ENCODE measurements at regions of chr7 and their contacts with region 1.

Region 1: GRCh38 chr7:108146070-108146837 is 16.1 kb upstream of the LAMB4 start:
- DNase-seq: peak; percentile 85
- H3K4me3 ChIP-seq: peak overlapping the region; percentile 1
- CTCF ChIP-seq: peak; percentile 93

Region 2: DNA sequence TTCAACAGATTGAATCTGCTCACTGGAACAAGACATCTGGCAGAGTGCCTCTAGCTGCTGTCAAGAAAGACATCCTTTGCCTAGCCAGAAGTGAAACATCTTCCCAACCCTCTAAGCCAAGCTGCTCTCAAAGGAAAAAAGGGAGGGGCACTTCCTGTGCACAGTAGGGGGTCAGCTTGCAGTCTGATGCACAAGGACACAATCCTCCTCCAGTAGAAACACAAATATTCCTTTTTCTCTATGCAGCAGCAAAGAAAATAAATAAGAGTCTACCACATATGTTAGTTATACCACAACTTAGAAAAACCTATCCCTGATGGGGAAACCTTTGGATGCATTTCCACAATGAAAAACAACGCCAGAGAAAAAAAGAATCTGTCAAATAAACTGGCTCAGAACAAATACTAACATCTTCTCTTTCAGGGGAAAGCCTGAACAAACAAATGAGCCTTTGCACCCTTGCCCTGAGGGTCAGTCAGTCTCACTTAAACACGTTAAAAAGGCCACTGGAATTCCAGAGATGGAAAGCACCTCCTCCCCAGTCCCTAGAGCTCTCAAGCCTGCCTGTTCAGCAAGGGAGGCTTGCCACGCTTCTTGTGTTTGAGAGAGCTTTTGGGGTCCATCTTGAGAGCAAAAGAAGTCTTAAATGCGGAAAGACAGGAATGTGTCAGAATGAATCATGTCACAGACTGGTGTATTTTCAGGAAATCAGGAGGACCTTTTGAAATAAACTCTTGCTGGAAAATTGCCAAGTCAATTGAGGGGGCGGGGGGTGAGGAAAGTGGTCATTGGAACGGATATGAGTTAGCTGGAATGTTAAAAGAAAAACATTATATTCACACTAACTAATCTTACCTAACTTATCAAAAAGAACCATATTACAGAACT is 150.8 kb before region 1 on chr7:
- in situ Hi-C with region 1: loop called (anchors 5 kb)
- DNase-seq: no peak
- H3K4me3 ChIP-seq: no peak overlapping the region
- CTCF ChIP-seq: no peak

Region 3: GRCh38 chr7:108203537-108203936 is 57.3 kb after region 1 on chr7:
- in situ Hi-C with region 1: no loop called
- DNase-seq: no peak
- H3K4me3 ChIP-seq: no peak overlapping the region
- CTCF ChIP-seq: no peak

Measured in astrocyte of the cerebellum (primary cell).